Naive thymus-derived CD4-positive, alpha-beta T cell (primary cell): ENCODE measurements at regions of chr2 and their contacts with region 1.

Region 1: DNA sequence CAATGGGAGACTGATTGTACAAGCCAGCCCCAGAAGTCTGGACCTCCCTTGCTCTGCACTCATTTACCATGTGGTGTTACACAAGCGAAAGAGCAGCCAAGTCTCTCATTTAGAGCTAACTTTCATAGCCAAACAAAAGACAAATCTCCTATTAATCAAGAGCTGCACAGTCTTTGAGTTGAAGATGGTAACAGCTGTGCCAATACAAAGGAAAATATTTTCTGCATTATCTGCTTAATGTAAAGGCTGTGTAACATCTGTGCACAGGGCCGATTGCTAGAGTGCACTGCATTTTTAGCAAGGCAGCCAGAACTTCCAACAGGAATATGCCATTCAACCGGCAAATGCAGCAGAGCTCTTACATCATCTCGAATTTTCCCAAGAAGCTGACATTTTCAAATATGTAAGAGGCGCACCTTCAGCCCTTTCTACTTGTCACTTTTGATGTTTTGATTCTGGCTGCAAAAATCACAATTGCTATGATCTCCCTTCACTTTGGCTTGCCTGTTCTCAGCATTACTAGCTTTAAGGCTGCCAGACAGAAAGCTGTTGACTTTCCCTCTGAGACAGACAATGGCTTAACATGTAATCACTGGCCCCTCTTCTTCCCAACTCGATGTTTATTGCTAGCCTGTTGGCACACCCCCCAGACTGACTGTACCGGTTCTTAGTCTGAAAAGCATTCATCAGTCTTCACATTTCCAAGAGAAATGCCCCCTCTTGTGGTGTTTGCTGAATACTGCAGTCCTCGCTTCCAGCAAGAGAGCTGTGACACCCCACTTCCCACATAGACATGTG is 96.9 kb upstream of the TANK start:
- DNase-seq: peak; percentile 17 to 70 (median 62)
- ATAC-seq: peak; percentile 94
- H3K4me3 ChIP-seq: no peak overlapping the region
- H3K4me3 Mint-ChIP-seq: no peak overlapping the region
- H3K27ac ChIP-seq: no peak overlapping the region
- H3K27ac Mint-ChIP-seq: peak overlapping the region in 3 of 9 donors; percentile 18 to 65 (median 53)
- H3K4me1 ChIP-seq: no peaks in the 10 kb centered on the region
- H3K4me1 Mint-ChIP-seq: peaks cover 2 to 12% (median 5%) of the 10 kb centered on the region in 7 donors
- H3K27me3 ChIP-seq: no peaks in the 10 kb centered on the region
- H3K27me3 Mint-ChIP-seq: peaks cover 0 to 5% (median 0%) of the 10 kb centered on the region in 5 donors

Region 2: DNA sequence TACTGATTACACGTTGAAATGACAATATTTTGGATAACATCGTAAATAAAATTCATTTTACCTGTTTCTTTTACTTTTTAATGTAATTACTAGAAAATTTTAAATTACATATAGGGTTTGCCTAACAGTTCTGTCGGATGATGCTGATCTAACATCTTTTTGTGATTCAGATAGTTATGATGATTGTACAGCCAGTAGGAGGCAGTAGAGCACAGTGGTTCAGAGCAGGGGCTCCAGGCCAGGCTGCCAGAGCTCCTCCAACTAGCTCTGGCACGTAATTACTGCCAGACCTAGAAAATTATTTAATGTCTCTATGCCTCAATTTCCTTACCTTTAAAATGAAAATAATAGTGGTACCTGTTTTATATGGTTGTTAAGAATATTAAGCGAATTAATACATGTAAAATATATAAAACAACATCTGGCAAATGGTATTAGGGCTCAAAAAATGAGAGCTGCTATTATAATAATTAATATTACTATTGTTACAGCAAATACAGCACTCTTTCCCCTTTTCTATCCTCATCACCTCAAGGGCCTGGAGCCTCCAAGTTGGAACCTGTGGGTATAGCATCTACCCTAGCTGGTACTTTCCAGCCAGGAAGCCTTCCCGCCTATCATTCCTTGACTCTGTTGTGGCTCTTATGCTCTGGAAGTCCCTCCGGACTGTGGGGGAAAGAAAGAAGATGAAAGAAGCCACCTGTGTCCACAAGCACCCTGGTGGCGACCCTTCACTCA is 953.3 kb before region 1 on chr2:
- CTCF ChIA-PET with region 1: interaction called, 9 read pairs
- POLR2A ChIA-PET with region 1: no interaction called
- intact Hi-C with region 1: loop called in 1 of 2 experiments (anchors 1 kb)
- DNase-seq: peak in 7 of 9 donors; percentile 34 to 74 (median 66)
- ATAC-seq: peak; percentile 85
- H3K4me3 ChIP-seq: no peak overlapping the region
- H3K4me3 Mint-ChIP-seq: no peak overlapping the region
- H3K27ac ChIP-seq: no peak overlapping the region
- H3K27ac Mint-ChIP-seq: no peak overlapping the region
- H3K4me1 ChIP-seq: no peaks in the 10 kb centered on the region
- H3K4me1 Mint-ChIP-seq: no peaks in the 10 kb centered on the region
- H3K27me3 ChIP-seq: no peaks in the 10 kb centered on the region
- H3K27me3 Mint-ChIP-seq: peaks cover 0 to 24% (median 8%) of the 10 kb centered on the region in 5 donors

Region 3: DNA sequence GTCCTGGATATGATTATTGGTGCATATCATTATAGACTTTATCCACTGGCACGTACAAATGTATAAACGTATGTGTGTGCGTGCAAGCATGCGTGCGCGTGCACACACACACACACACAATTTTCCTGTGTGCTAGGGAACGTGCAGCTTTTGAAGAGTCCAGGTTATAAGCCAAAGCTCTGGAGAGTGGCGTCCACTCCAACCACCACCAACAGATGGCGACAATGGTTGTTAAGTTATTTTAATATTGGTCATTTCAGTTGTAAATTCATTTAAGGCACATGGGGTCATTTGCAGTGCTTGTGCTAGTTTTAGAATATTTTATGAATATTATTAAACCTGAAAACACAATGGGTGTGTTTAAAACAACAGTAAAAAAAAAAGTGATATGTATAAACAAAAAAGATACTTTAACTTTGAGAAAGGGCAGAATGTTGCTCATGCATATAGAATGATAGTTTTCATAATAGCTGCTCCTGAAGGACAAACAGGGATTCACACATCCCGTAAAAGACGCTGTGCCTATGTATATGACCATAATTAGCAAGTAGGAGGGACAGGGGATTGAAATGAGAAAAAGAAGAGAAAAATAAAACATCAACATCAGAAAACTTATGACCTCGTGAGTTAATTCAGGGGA is 739.1 kb before region 1 on chr2:
- CTCF ChIA-PET with region 1: interaction called, 3 read pairs
- POLR2A ChIA-PET with region 1: no interaction called
- intact Hi-C with region 1: loop called (anchors 5 kb)
- DNase-seq: peak in 5 of 9 donors; percentile 10 to 38 (median 21)
- ATAC-seq: peak; percentile 64
- H3K4me3 ChIP-seq: no peak overlapping the region
- H3K4me3 Mint-ChIP-seq: peak overlapping the region in 1 of 10 donors; percentile 40
- H3K27ac ChIP-seq: no peak overlapping the region
- H3K27ac Mint-ChIP-seq: peak overlapping the region in 3 of 9 donors; percentile 10 to 65 (median 32)
- H3K4me1 ChIP-seq: peaks cover 10 to 58% of the 10 kb centered on the region in 2 donors
- H3K4me1 Mint-ChIP-seq: peaks cover 61 to 98% (median 96%) of the 10 kb centered on the region in 7 donors
- H3K27me3 ChIP-seq: no peaks in the 10 kb centered on the region
- H3K27me3 Mint-ChIP-seq: no peaks in the 10 kb centered on the region

Region 4: GRCh38 chr2:160621748-160622147 is 441.6 kb before region 1 on chr2:
- CTCF ChIA-PET with region 1: no interaction called
- POLR2A ChIA-PET with region 1: no interaction called
- intact Hi-C with region 1: no loop called
- DNase-seq: no peak
- ATAC-seq: no peak
- H3K4me3 ChIP-seq: no peak overlapping the region
- H3K4me3 Mint-ChIP-seq: no peak overlapping the region
- H3K27ac ChIP-seq: no peak overlapping the region
- H3K27ac Mint-ChIP-seq: no peak overlapping the region
- H3K4me1 ChIP-seq: no peaks in the 10 kb centered on the region
- H3K4me1 Mint-ChIP-seq: no peaks in the 10 kb centered on the region
- H3K27me3 ChIP-seq: no peaks in the 10 kb centered on the region
- H3K27me3 Mint-ChIP-seq: peaks cover 0 to 1% (median 0%) of the 10 kb centered on the region in 5 donors

Region 5: DNA sequence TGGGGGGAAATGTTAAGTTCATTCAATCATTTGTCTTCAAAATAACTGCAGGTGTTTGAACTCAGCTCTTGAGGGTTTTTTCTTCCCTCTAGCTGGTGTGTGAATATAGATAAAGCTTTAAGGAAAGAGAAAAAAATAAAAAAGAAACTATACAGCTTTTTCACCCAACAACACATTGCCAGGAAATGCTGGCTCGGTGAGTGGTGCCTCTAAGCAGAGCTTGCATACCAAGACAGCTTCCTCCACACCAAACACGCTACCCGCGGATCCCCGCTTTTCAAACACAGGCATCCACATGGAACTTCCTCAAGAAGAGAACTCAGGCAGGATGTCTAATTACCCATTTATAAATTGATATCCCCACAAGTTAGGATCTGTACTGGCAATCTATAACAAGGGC is 27.1 kb after region 1 on chr2:
- CTCF ChIA-PET with region 1: interaction called, 4 read pairs
- POLR2A ChIA-PET with region 1: no interaction called
- intact Hi-C with region 1: loop called in 1 of 2 experiments (anchors 1 kb)
- DNase-seq: peak in 6 of 9 donors; percentile 26 to 47 (median 39)
- ATAC-seq: peak; percentile 76
- H3K4me3 ChIP-seq: peak overlapping the region; percentile 20
- H3K4me3 Mint-ChIP-seq: peak overlapping the region in 9 of 10 donors; percentile 49 to 81 (median 71)
- H3K27ac ChIP-seq: no peak overlapping the region
- H3K27ac Mint-ChIP-seq: peak overlapping the region in 7 of 9 donors; percentile 11 to 91 (median 74)
- H3K4me1 ChIP-seq: peaks cover 5 to 11% of the 10 kb centered on the region in 2 donors
- H3K4me1 Mint-ChIP-seq: peaks cover 13 to 52% (median 19%) of the 10 kb centered on the region in 7 donors
- H3K27me3 ChIP-seq: no peaks in the 10 kb centered on the region
- H3K27me3 Mint-ChIP-seq: no peaks in the 10 kb centered on the region

Region 6: GRCh38 chr2:161273038-161273760 is 209.8 kb after region 1 on chr2:
- CTCF ChIA-PET with region 1: interaction called, 6 read pairs
- POLR2A ChIA-PET with region 1: no interaction called
- intact Hi-C with region 1: loop called (anchors 1 kb)
- DNase-seq: peak in 7 of 9 donors; percentile 26 to 65 (median 58)
- ATAC-seq: peak; percentile 80
- H3K4me3 ChIP-seq: no peak overlapping the region
- H3K4me3 Mint-ChIP-seq: no peak overlapping the region
- H3K27ac ChIP-seq: no peak overlapping the region
- H3K27ac Mint-ChIP-seq: no peak overlapping the region
- H3K4me1 ChIP-seq: no peaks in the 10 kb centered on the region
- H3K4me1 Mint-ChIP-seq: peaks cover 0 to 3% (median 0%) of the 10 kb centered on the region in 7 donors
- H3K27me3 ChIP-seq: no peaks in the 10 kb centered on the region
- H3K27me3 Mint-ChIP-seq: peaks cover 4 to 27% (median 5%) of the 10 kb centered on the region in 5 donors